Activated CD4-positive, alpha-beta T cell treated with anti-CD3 and anti-CD28 coated beads for 36 hours (primary cell): ENCODE measurements at regions of chr22 and their contacts with region 1.

Region 1: DNA sequence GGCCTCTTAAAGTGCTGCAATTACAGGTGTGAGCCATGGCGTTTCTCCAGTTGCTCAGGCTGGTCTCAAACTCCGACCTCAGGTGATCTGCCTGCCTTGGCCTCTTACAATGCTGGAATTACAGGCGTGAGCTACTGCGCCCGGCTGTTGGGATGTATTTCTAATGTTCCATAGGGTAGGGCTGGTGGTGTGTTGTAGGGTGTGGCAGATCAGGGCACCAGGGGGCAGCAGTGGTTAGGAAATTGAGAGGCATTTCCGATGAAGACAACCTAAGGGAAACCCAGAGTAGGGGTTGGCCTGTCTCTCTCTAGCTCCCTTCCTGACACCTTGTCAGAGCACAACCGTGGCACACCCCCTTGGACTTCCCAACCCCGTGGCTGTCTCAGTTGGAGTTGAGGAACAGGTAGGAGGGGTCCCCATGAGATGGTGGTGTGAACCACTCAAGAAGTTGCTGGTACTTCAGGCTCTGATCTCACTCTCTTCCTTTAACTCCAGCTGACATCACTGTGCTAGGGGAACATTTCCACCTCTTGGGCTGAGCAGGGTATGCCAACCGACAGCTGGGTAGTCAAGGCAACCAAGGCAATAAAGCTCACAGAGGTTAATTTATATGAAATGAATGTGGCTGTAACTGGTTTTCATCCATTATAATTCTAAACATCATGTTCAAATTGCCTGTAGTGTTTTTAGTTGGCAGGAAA is 33.0 kb downstream of the YWHAH start:
- DNase-seq: peak; percentile 92
- ATAC-seq: peak; percentile 98
- H3K4me3 Mint-ChIP-seq: no peak overlapping the region
- H3K27ac Mint-ChIP-seq: no peak overlapping the region
- H3K4me1 Mint-ChIP-seq: peaks cover 5% of the 10 kb centered on the region
- H3K27me3 Mint-ChIP-seq: peaks cover 2% of the 10 kb centered on the region

Region 2: DNA sequence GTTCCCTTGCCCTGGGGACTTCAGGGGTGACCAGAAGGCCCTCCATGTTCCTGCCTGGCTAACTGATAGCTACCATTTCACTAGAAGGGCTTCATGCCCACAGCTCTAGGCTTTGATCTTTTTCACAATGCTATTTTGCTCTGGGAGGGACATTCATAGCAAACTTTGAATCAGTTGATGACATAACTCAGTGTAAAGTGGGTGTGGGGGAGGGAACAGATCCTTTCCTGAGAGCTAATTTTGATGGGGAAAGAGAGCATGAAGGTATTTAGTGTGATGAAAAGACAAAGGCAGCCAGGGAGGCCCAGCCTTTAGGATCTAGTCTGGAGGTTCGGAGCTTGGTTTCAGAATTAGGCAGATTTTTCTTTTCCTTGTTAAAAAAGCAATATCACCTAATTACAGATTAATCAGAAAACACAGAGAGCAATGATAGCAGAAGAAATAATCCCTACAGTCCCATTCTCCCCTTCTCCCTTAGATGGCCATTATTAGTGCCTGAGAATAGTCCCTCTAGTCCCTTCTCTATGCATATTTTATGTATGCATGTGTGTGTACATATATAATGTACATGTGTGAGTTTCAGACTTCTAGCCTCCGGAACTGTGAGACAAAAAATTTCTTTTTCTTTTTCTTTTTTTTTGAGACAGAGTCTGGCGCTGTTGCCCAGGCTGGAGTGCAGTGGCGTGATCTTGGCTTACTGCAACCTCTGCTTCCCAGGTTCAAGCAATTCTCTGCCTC is 14.0 kb after region 1 on chr22:
- CTCF ChIA-PET with region 1: interaction called, 12 read pairs
- POLR2A ChIA-PET with region 1: no interaction called
- intact Hi-C with region 1: no loop called
- DNase-seq: no peak
- ATAC-seq: no peak
- H3K4me3 Mint-ChIP-seq: no peak overlapping the region
- H3K27ac Mint-ChIP-seq: no peak overlapping the region
- H3K4me1 Mint-ChIP-seq: no peaks in the 10 kb centered on the region
- H3K27me3 Mint-ChIP-seq: peaks cover 9% of the 10 kb centered on the region

Region 3: DNA sequence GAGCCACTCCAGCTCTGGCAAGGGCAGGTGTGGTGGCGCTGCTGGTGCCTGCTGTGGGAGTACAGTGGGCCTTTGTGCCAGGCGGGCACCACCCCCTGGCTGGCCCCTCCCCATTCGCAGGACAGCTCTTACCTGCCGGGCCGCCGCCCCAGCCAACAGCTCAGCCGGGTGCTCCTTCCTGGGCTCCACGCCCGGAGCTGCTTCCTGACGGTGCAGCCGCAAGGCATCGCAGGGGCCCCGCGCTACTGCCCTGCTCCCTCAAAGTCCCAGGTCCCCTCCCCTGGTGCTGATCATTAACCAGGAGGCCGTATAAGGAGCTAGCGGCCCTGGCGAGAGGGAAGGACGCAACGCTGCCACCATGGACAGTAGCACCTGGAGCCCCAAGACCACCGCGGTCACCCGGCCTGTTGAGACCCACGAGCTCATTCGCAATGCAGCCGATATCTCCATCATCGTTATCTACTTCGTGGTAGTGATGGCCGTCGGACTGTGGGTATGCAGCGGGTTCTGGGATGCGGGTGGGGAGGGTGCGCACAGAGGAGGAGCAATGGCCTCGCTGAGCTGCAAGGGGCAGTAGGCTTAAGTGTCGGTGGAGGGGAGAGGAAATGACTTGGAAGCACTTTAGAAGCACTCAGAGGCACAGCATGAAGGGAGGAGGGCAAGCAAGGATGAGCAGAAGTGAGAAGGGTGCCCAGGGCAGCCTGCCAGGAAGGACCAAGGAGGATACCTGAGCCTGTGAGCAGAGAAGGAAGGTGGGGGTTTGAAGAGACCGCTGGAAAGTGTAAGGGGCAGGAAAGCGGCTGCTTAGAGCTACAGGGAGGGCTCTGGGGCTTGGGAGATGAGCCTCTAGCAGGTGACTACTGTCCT is 65.9 kb after region 1 on chr22 and contains the start of gene SLC5A1:
- CTCF ChIA-PET with region 1: no interaction called
- POLR2A ChIA-PET with region 1: no interaction called
- intact Hi-C with region 1: no loop called
- DNase-seq: no peak
- ATAC-seq: no peak
- H3K4me3 Mint-ChIP-seq: no peak within 1 kb of the TSS
- H3K27ac Mint-ChIP-seq: no peak within 1 kb of the TSS
- H3K4me1 Mint-ChIP-seq: no peaks in the 10 kb centered on the region
- H3K27me3 Mint-ChIP-seq: peaks cover 62% of the 10 kb centered on the region
- total RNA-seq, gene SLC5A1: not detected

Region 4: GRCh38 chr22:32080904-32081303 is 103.6 kb after region 1 on chr22:
- CTCF ChIA-PET with region 1: interaction called, 114 read pairs
- POLR2A ChIA-PET with region 1: no interaction called
- intact Hi-C with region 1: loop called (anchors 1 kb)
- DNase-seq: peak; percentile 36
- ATAC-seq: peak; percentile 60
- H3K4me3 Mint-ChIP-seq: no peak overlapping the region
- H3K27ac Mint-ChIP-seq: no peak overlapping the region
- H3K4me1 Mint-ChIP-seq: no peaks in the 10 kb centered on the region
- H3K27me3 Mint-ChIP-seq: peaks cover 5% of the 10 kb centered on the region

Region 5: GRCh38 chr22:32202539-32203180 is 225.4 kb after region 1 on chr22:
- CTCF ChIA-PET with region 1: no interaction called
- POLR2A ChIA-PET with region 1: no interaction called
- intact Hi-C with region 1: loop called in 1 of 2 experiments (anchors 1 kb)
- DNase-seq: peak; percentile 59
- ATAC-seq: peak; percentile 55
- H3K4me3 Mint-ChIP-seq: peak overlapping the region; percentile 63
- H3K27ac Mint-ChIP-seq: no peak overlapping the region
- H3K4me1 Mint-ChIP-seq: peaks cover 21% of the 10 kb centered on the region
- H3K27me3 Mint-ChIP-seq: peaks cover 18% of the 10 kb centered on the region

Region 6: GRCh38 chr22:33000342-33001280 is 1023.3 kb after region 1 on chr22:
- CTCF ChIA-PET with region 1: no interaction called
- POLR2A ChIA-PET with region 1: no interaction called
- intact Hi-C with region 1: loop called in 1 of 2 experiments (anchors 5 kb)
- DNase-seq: peak; percentile 64
- ATAC-seq: no peak
- H3K4me3 Mint-ChIP-seq: no peak overlapping the region
- H3K27ac Mint-ChIP-seq: no peak overlapping the region
- H3K4me1 Mint-ChIP-seq: no peaks in the 10 kb centered on the region
- H3K27me3 Mint-ChIP-seq: no peaks in the 10 kb centered on the region